ENCODE measurements at regions of chr14 and their contacts with region 1.

Region 1: DNA sequence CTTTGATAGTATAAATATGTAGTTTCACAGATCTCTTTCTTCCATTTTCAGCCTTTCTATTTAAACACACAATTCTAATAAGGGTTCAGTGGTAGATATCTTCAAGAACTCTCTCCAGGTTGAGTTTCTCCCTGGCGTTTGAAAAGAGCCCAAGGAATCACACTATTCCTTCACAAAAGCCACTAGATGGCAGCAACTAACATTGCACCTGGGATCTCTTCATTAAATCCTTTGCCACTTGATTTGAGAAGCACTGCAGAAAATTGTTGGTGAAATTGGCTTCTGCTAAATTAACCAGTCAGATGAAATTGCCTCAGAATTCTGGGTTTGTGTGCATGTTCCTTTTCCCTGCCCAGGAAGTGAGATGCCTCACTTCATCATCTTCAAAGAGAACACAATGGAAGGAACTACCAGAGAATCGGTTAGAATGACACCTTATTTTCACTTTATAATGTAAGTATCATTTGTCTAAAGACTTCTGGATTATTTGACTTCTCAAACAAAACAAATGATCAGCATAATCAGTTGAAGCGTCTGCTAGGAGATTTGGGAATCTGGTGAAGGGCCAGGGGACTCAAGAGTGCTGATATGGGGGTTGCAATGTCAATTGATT is 6.8 kb downstream of the CCDC198 start:
- DNase-seq: peak; percentile 49
- H3K4me3 ChIP-seq: no peak overlapping the region
- CTCF ChIP-seq: peak; percentile 81

Region 2: DNA sequence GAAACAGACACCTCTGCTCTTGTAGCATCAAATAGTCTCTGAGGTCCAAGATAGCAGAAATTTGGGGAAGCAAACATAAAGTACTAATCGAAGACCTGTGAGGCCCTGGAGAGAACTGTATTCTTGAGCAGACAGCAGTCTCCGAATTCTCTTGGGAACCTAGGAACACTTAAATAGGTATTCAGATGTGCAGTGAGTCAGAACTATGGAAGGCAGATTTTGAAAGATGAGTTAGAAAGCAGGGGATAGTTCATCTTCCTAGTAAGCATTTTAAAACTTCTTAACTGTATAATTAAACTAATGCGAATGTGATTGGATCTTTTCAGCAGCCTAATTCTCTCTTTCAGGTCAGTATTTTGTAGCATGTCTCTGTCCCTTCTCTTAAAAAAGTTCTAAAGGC is 65.9 kb before region 1 on chr14:
- in situ Hi-C with region 1: no loop called
- DNase-seq: no peak
- H3K4me3 ChIP-seq: no peak overlapping the region
- CTCF ChIP-seq: no peak

Region 3: DNA sequence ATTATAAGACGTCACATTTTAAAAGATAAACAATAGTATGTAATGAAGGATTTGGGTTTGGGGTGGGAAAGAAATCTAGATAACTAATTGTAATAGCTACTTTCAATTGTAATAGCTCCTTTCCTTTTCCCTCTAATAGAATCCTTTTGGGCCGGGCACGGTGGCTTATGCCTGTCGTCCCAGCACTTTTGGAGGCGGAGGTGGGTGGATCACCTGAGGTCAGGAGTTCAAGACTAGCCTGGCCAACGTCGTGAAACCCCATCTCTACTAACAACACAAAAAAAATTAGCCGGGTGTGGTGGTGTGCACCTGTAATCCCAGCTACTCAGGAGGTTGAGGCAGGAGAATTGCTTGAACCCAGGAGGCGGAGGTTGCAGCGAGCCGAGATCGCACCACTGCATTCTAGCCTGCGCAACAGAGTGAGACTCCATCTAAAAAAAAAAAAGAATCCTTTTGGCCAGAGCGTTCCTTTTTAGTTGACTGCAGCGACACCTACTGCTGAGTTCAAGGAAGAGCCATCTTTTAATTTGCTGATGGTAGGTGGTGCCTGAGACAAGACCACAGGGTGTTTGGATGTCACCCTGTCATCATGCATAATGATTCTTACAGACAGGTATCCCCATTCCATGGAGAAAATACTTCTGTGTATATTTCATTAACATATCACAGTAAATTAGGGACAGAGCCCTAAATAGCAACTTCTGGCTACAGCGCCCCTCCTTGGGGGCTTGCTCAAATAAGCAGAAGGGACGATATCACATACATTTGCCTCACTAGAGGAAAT is 585.6 kb after region 1 on chr14:
- in situ Hi-C with region 1: loop called (anchors 25 kb)
- DNase-seq: peak; percentile 53
- H3K4me3 ChIP-seq: no peak overlapping the region
- CTCF ChIP-seq: peak; percentile 70